ENCODE measurements at regions of chr7 and their contacts with region 1.

Region 1: GRCh38 chr7:23357190-23358093 is 58.3 kb downstream of the MALSU1 start:
- DNase-seq: peak; percentile 91
- ATAC-seq: peak; percentile 67
- H3K4me3 ChIP-seq: peak overlapping the region in 1 of 3 experiments; percentile 36; a peak in 1 of 6 replicates
- H3K27ac ChIP-seq: peak overlapping the region; percentile 82
- H3K4me1 ChIP-seq: peaks cover 71% of the 10 kb centered on the region
- H3K27me3 ChIP-seq: no peaks in the 10 kb centered on the region
- CTCF ChIP-seq: peak; percentile 40
- EP300 ChIP-seq: peak in 1 of 2 experiments; percentile 83; a peak in 2 of 4 replicates
- POLR2A ChIP-seq: no peak
- RAD21 ChIP-seq: no peak

Region 2: DNA sequence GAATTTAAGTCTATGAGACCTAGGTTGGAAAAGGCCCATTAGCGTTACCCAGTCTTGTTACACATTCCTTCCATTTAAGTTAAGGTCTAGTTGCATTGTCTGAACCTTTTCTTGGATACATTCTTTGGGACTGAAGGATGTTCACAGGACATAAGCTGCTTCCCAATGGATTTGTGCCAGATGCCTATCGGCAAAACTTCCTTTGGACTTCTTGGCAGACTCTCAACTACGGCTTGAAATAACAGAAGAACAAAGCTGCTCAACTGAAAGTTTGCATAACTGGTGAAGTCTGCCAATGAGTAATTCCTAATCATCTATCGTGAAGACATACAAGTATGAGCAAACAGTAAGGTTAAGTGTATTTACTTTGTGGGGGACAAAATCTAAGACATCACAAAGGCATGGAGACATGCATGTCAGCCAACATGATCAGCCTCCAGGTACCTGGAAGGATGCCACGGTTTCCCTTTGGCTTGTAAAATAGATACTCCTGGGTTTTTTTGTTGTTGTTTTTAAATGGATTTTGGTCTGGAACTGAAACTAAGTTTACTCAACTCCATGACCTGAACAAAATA is 22.9 kb before region 1 on chr7:
- CTCF ChIA-PET with region 1: interaction called, 3 read pairs
- POLR2A ChIA-PET with region 1: interaction called, 29 read pairs
- in situ Hi-C with region 1: no loop called
- intact Hi-C with region 1: no loop called
- DNase-seq: peak; percentile 94
- ATAC-seq: peak; percentile 76
- H3K4me3 ChIP-seq: no peak overlapping the region
- H3K27ac ChIP-seq: peak overlapping the region; percentile 84
- H3K4me1 ChIP-seq: peaks cover 78% of the 10 kb centered on the region
- H3K27me3 ChIP-seq: no peaks in the 10 kb centered on the region
- CTCF ChIP-seq: no peak
- EP300 ChIP-seq: peak; percentile 31 to 98; a peak in 2 of 4 replicates
- POLR2A ChIP-seq: no peak
- RAD21 ChIP-seq: no peak

Region 3: GRCh38 chr7:23394488-23395171 is 37.2 kb after region 1 on chr7:
- CTCF ChIA-PET with region 1: no interaction called
- POLR2A ChIA-PET with region 1: interaction called, 6 read pairs
- in situ Hi-C with region 1: no loop called
- intact Hi-C with region 1: loop called (anchors 5 kb)
- DNase-seq: no peak
- ATAC-seq: no peak
- H3K4me3 ChIP-seq: no peak overlapping the region
- H3K27ac ChIP-seq: no peak overlapping the region
- H3K4me1 ChIP-seq: peaks cover 52% of the 10 kb centered on the region
- H3K27me3 ChIP-seq: no peaks in the 10 kb centered on the region
- CTCF ChIP-seq: no peak
- EP300 ChIP-seq: no peak
- POLR2A ChIP-seq: no peak
- RAD21 ChIP-seq: no peak

Region 4: GRCh38 chr7:23431702-23432199 is 74.3 kb after region 1 on chr7:
- CTCF ChIA-PET with region 1: no interaction called
- POLR2A ChIA-PET with region 1: no interaction called
- in situ Hi-C with region 1: no loop called
- intact Hi-C with region 1: loop called (anchors 5 kb)
- DNase-seq: no peak
- ATAC-seq: no peak
- H3K4me3 ChIP-seq: no peak overlapping the region
- H3K27ac ChIP-seq: peak overlapping the region; percentile 17
- H3K4me1 ChIP-seq: peaks cover 28% of the 10 kb centered on the region
- H3K27me3 ChIP-seq: no peaks in the 10 kb centered on the region
- CTCF ChIP-seq: no peak
- EP300 ChIP-seq: no peak
- POLR2A ChIP-seq: no peak
- RAD21 ChIP-seq: no peak

Region 5: DNA sequence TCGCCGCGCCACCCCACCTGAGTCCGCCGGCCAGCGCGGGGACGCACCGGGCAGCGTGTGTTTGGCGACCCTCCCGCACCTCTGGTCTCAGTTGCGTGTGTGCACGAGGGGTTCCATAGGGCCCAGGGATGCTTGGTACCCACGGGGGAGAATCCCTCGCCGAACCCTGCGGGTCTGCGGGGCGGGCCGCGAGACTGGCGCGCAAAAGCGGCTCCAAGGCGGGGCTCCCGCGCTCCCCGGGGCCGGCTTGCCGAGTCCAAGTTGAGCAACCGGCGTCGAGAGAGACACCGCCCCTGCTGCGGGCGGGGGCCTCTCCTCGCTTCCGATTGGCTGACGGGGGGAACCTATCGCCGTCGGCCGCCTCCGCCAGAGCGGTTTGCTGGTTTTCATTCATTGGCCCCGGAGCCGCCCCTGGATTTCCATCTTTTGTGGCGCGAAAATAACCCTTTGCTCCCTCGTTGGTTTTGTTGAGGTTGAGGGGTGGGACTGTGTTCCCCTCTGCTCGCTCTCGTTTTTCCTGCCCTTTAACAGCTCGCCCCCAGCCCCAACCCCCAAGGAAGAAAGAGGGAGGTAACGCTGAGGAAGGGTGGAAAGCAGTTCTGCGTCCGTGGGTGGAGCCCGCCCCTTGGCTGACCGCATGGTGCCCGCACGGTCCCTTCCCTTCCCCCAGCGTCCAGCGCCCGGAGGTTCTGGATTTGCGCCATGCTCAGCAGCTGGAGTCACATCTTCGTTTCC is 116.8 kb after region 1 on chr7:
- CTCF ChIA-PET with region 1: no interaction called
- POLR2A ChIA-PET with region 1: interaction called, 10 read pairs
- in situ Hi-C with region 1: no loop called
- intact Hi-C with region 1: loop called (anchors 2 kb)
- DNase-seq: peak; percentile 96
- ATAC-seq: peak; percentile 80
- H3K4me3 ChIP-seq: peak overlapping the region; percentile 86 to 93 (median 91)
- H3K27ac ChIP-seq: peak overlapping the region; percentile 96
- H3K4me1 ChIP-seq: peaks cover 25% of the 10 kb centered on the region
- H3K27me3 ChIP-seq: no peaks in the 10 kb centered on the region; a peak in 1 of 5 replicates
- CTCF ChIP-seq: peak; percentile 13; the same call in 1 of the 2 replicates
- EP300 ChIP-seq: 0 out of 4 replicates have a peak, but pooled peaks of 1 of the 2 experiments have one; percentile 5
- POLR2A ChIP-seq: peak in 1 of 2 experiments; percentile 74; a peak in 1 of 4 replicates
- RAD21 ChIP-seq: no peak; the same call in 1 of the 2 replicates

Measured in HepG2 (cell line).